B cell (primary cell): ENCODE measurements at regions of chr16 and their contacts with region 1.

Region 1: DNA sequence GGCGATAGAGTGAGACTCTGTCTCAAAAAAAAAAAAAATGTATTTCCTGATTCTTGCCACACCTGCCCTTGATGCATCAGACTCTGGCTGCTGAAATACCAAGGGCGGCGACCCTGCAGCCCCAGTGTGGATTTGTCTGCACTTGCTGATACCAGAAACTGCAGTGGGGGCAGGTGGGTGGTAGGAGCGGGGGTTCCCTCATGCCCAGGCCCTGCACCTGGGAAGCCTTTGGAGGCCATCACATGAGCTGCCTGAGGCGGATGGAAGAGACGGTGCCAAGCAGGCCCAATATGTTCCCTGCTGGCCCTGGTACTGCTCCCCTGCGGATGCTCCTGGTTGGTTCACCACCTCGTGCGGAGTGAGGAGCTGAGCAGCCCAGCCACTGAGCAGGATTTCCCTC is 50.6 kb downstream of the MARF1 start:
- DNase-seq: peak; percentile 41
- ATAC-seq: peak; percentile 13
- H3K4me3 ChIP-seq: no peak overlapping the region
- H3K4me3 Mint-ChIP-seq: peak overlapping the region; percentile 54
- H3K27ac ChIP-seq: peak overlapping the region; percentile 1 to 51
- H3K27ac Mint-ChIP-seq: peak overlapping the region; percentile 89
- H3K4me1 ChIP-seq: peaks cover 20 to 46% of the 10 kb centered on the region in 2 donors
- H3K4me1 Mint-ChIP-seq: peaks cover 62% of the 10 kb centered on the region
- H3K27me3 ChIP-seq: no peaks in the 10 kb centered on the region
- H3K27me3 Mint-ChIP-seq: no peaks in the 10 kb centered on the region
- CTCF ChIP-seq: no peak

Region 2: GRCh38 chr16:15427648-15428239 is 164.6 kb before region 1 on chr16:
- CTCF ChIA-PET with region 1: interaction called, 10 read pairs
- POLR2A ChIA-PET with region 1: no interaction called
- intact Hi-C with region 1: loop called (anchors 5 kb)
- DNase-seq: peak; percentile 61
- ATAC-seq: peak; percentile 56
- H3K4me3 ChIP-seq: no peak overlapping the region
- H3K4me3 Mint-ChIP-seq: no peak overlapping the region
- H3K27ac ChIP-seq: no peak overlapping the region
- H3K27ac Mint-ChIP-seq: no peak overlapping the region
- H3K4me1 ChIP-seq: peaks cover 0 to 3% of the 10 kb centered on the region in 2 donors
- H3K4me1 Mint-ChIP-seq: peaks cover 3% of the 10 kb centered on the region
- H3K27me3 ChIP-seq: no peaks in the 10 kb centered on the region
- H3K27me3 Mint-ChIP-seq: peaks cover 14% of the 10 kb centered on the region
- CTCF ChIP-seq: peak; percentile 63

Region 3: DNA sequence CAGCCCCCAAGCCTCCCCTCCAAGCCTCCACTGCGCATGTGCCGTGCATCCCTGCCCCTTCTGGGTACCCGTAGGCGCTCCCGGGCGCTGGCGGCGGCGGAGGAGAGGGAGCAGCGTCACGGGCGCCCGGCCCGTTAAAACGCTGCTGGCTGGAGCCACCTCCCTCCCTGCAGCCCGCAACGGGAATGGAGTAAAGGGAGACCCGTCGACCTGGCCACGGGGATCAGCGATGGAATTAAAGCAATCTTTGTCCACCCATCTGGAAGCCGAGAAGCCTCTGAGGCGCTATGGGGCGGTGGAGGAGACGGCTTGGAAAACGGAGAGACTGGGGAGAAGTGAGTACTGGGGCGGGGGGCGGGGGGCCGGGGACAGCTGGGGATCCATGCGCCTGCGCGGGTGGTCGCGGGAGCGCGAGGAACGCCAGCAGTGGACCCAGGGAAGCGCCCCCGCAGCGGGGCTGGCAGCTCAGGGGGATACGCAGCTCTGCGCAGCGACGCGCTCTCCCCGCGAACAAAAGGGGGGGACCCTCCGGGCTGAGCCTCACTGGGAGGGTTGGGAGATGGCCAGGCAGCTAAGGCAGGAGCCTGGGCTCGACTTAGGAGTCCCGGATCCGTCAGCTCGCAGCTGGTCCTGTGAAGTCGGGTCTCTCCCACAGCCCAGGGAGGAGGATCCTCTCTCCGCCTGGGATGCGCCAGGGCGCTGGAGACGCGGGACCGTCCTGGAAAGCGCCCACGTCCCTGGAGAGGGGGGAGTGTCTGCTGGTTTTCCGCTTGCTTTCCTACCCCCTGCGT is 157.7 kb before region 1 on chr16 and contains the start of gene BMERB1:
- CTCF ChIA-PET with region 1: no interaction called
- POLR2A ChIA-PET with region 1: no interaction called
- intact Hi-C with region 1: loop called (anchors 5 kb)
- DNase-seq: peak; percentile 45
- ATAC-seq: peak; percentile 63
- H3K4me3 ChIP-seq: peak within 1 kb of the TSS in 4 of 5 experiments; percentile 31 to 61 (median 48)
- H3K4me3 Mint-ChIP-seq: peak within 1 kb of the TSS; percentile 89
- H3K27ac ChIP-seq: no peak within 1 kb of the TSS
- H3K27ac Mint-ChIP-seq: no peak within 1 kb of the TSS
- H3K4me1 ChIP-seq: peaks cover 9 to 16% of the 10 kb centered on the region in 2 donors
- H3K4me1 Mint-ChIP-seq: peaks cover 16% of the 10 kb centered on the region
- H3K27me3 ChIP-seq: peaks cover 0 to 24% (median 11%) of the 10 kb centered on the region in 4 experiments
- H3K27me3 Mint-ChIP-seq: peaks cover 14% of the 10 kb centered on the region
- CTCF ChIP-seq: no peak
- total RNA-seq, gene BMERB1: 11.2 and 13.5 TPM in 2 replicates

Region 4: DNA sequence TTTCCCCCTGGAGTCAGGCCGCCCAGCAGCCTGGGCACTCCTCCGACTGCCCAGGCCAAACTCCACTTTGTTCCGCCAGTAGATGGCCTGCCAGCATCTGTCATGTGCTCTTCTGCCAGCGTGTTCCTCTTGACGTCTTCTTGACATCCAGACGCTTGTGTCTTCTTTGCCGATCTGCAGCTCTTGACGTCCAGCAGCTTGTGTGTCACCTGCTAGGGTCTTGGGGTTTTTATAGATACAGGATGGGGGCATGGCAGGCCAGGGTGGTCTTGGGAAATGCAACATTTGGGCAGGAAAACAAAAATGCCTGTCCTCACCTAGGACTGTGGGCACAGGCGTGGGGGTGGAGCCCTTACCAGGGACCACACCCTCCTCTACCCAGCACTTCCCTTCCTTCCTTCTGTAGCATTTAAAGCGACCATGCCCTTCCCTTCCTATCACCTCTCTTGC is 69.2 kb before region 1 on chr16:
- CTCF ChIA-PET with region 1: no interaction called
- POLR2A ChIA-PET with region 1: interaction called, 4 read pairs
- intact Hi-C with region 1: loop called (anchors 2 kb)
- DNase-seq: peak; percentile 9
- ATAC-seq: no peak
- H3K4me3 ChIP-seq: no peak overlapping the region
- H3K4me3 Mint-ChIP-seq: peak overlapping the region; percentile 69
- H3K27ac ChIP-seq: no peak overlapping the region
- H3K27ac Mint-ChIP-seq: peak overlapping the region; percentile 24
- H3K4me1 ChIP-seq: peaks cover 5 to 11% of the 10 kb centered on the region in 2 donors
- H3K4me1 Mint-ChIP-seq: peaks cover 10% of the 10 kb centered on the region
- H3K27me3 ChIP-seq: no peaks in the 10 kb centered on the region
- H3K27me3 Mint-ChIP-seq: no peaks in the 10 kb centered on the region
- CTCF ChIP-seq: no peak

Region 5: GRCh38 chr16:15636392-15636873 is 44.1 kb after region 1 on chr16:
- CTCF ChIA-PET with region 1: interaction called, 26 read pairs
- POLR2A ChIA-PET with region 1: interaction called, 33 read pairs
- intact Hi-C with region 1: loop called (anchors 1 kb)
- DNase-seq: peak; percentile 74
- ATAC-seq: peak; percentile 74
- H3K4me3 ChIP-seq: peak overlapping the region in 3 of 5 experiments; percentile 3 to 46 (median 3)
- H3K4me3 Mint-ChIP-seq: peak overlapping the region; percentile 87
- H3K27ac ChIP-seq: peak overlapping the region; percentile 83 to 100
- H3K27ac Mint-ChIP-seq: peak overlapping the region; percentile 91
- H3K4me1 ChIP-seq: peaks cover 92 to 93% of the 10 kb centered on the region in 2 donors
- H3K4me1 Mint-ChIP-seq: peaks cover 89% of the 10 kb centered on the region
- H3K27me3 ChIP-seq: no peaks in the 10 kb centered on the region
- H3K27me3 Mint-ChIP-seq: no peaks in the 10 kb centered on the region
- CTCF ChIP-seq: no peak

Region 6: GRCh38 chr16:15643048-15643945 is 51.0 kb after region 1 on chr16 and contains the start of gene MARF1:
- CTCF ChIA-PET with region 1: interaction called, 26 read pairs
- POLR2A ChIA-PET with region 1: interaction called, 33 read pairs
- intact Hi-C with region 1: loop called (anchors 1 kb)
- DNase-seq: peak; percentile 99
- ATAC-seq: peak; percentile 70
- H3K4me3 ChIP-seq: peak within 1 kb of the TSS; percentile 87 to 96 (median 90)
- H3K4me3 Mint-ChIP-seq: peak within 1 kb of the TSS; percentile 95
- H3K27ac ChIP-seq: peak within 1 kb of the TSS; percentile 93 to 100
- H3K27ac Mint-ChIP-seq: peak within 1 kb of the TSS; percentile 98
- H3K4me1 ChIP-seq: peaks cover 40 to 46% of the 10 kb centered on the region in 2 donors
- H3K4me1 Mint-ChIP-seq: peaks cover 50% of the 10 kb centered on the region
- H3K27me3 ChIP-seq: no peaks in the 10 kb centered on the region
- H3K27me3 Mint-ChIP-seq: no peaks in the 10 kb centered on the region
- CTCF ChIP-seq: peak; percentile 38
- total RNA-seq, gene MARF1: 366 and 402 TPM in 2 replicates

Region 7: DNA sequence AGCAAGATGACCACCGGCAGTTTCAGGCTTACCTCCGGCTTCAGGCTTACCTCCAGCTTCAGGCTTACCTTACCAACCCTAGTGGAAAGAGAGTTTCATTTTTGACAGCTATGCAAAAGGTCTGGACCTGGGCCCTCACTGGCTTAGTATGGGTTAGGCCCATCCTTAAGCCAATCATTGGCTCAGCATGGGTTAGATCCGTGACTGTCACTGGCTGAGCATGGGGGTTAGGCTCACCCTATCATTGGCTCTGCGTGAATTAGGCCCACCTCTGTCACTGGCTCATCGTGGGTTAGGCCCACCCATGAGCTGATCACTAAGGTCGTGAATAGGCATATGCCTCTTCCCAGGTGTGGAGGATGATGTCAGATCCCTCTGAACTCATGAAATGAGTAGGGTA is 65.8 kb after region 1 on chr16:
- CTCF ChIA-PET with region 1: interaction called, 3 read pairs
- POLR2A ChIA-PET with region 1: interaction called, 12 read pairs
- intact Hi-C with region 1: no loop called
- DNase-seq: no peak
- ATAC-seq: peak; percentile 19
- H3K4me3 ChIP-seq: no peak overlapping the region
- H3K4me3 Mint-ChIP-seq: peak overlapping the region; percentile 49
- H3K27ac ChIP-seq: peak overlapping the region; percentile 72 to 89
- H3K27ac Mint-ChIP-seq: peak overlapping the region; percentile 86
- H3K4me1 ChIP-seq: peaks cover 26 to 36% of the 10 kb centered on the region in 2 donors
- H3K4me1 Mint-ChIP-seq: peaks cover 62% of the 10 kb centered on the region
- H3K27me3 ChIP-seq: no peaks in the 10 kb centered on the region
- H3K27me3 Mint-ChIP-seq: no peaks in the 10 kb centered on the region
- CTCF ChIP-seq: no peak